Activated B cell treated with CpG ODN at 0.5 μM for 24 hours (primary cell): ENCODE measurements at regions of chr7 and their contacts with region 1.

Region 1: DNA sequence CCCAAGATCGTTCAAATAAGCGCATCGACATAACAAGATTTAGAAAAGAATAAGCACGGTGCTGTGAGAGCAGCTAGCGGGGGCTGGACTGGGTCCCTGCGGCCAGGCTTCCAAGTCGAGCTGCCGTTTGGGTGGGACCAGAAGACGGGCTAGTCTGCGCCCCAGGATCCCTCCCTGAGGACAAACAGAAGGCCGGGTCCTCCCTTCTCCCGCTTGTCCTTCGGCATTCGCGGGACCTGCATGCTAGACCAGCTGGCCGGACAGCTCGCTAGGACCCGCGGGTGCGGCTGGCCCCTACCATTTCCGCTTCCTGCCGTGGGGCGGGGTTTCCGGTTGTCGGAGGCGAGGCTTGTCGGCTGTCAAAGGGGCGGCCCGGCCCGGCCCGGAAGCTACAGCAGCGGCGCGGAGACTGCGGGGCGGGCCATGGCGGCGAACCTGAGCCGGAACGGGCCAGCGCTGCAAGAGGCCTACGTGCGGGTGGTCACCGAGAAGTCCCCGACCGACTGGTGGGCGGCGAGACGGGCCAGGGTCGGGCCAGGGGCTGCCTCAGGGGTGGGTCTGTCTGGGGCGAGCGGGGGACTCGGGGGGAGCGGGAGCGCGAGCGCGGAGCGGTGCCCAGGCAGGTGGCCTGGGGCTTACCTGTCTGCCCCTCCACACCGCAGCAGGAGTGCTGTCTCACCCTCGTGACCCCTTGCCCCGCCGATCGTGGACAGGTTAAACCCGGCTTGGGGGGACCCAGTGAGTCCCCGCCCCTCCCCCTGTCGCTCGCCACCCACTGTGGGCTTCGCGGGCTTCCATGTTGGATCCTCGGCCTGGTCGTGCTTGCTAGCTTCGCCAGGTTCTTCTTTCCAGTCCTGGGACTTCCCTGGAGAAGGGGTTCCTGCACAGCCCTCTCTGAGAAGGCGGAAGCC is at the start of gene DBNL:
- DNase-seq: peak; percentile 92
- ATAC-seq: peak; percentile 50
- H3K4me3 Mint-ChIP-seq: peak within 1 kb of the TSS; percentile 93
- H3K27ac Mint-ChIP-seq: peak within 1 kb of the TSS; percentile 95
- H3K4me1 Mint-ChIP-seq: peaks cover 64% of the 10 kb centered on the region
- H3K27me3 Mint-ChIP-seq: no peaks in the 10 kb centered on the region
- CTCF ChIP-seq: no peak
- total RNA-seq, gene DBNL: 198 and 210 TPM in 2 replicates

Region 2: GRCh38 chr7:43925984-43926797 is 118.4 kb before region 1 on chr7 and contains the start of gene UBE2D4:
- CTCF ChIA-PET with region 1: no interaction called
- POLR2A ChIA-PET with region 1: interaction called, 13 read pairs
- intact Hi-C with region 1: no loop called
- DNase-seq: peak; percentile 89
- ATAC-seq: peak; percentile 88
- H3K4me3 Mint-ChIP-seq: peak within 1 kb of the TSS; percentile 87
- H3K27ac Mint-ChIP-seq: peak within 1 kb of the TSS; percentile 93
- H3K4me1 Mint-ChIP-seq: peaks cover 24% of the 10 kb centered on the region
- H3K27me3 Mint-ChIP-seq: no peaks in the 10 kb centered on the region
- CTCF ChIP-seq: no peak
- total RNA-seq, gene UBE2D4: 18.9 and 19.6 TPM in 2 replicates

Region 3: DNA sequence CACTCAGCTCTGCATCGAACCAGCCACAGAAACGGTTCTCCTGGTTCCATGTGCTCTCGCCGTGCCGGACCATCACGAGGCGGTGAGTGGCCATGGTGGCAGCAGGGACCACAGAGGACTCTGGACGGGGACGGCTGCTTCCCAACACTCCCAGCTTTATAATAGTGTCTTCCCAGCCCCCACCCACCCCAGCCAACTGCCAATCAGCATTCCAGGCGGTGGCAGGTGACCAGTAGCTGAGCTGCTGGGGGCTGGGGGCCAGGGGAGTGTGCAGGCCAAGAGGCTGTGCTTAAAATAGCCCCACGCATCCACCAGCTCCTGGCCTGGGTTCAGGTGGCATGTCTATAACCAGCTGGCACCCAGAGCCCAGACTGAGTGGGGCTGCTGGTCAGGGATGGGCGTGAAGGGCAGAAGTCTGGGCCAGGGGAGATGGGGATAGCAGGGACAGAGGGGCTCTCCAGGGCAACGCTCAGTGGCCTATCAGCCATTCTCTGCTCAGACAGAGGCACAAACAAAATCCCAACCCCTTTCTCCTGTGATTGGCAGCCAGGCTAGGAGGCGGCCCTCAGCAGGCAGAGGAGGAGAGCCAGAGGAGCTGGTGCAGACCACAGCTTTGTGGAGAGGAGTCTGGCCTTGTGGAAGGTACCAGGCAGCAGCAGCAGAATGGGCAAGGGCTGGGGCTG is 21.0 kb after region 1 on chr7 and contains the start of gene PGAM2:
- CTCF ChIA-PET with region 1: no interaction called
- POLR2A ChIA-PET with region 1: interaction called, 55 read pairs
- intact Hi-C with region 1: no loop called
- DNase-seq: no peak
- ATAC-seq: peak; percentile 32
- H3K4me3 Mint-ChIP-seq: peak within 1 kb of the TSS; percentile 28
- H3K27ac Mint-ChIP-seq: peak within 1 kb of the TSS; percentile 72
- H3K4me1 Mint-ChIP-seq: peaks cover 65% of the 10 kb centered on the region
- H3K27me3 Mint-ChIP-seq: no peaks in the 10 kb centered on the region
- CTCF ChIP-seq: no peak
- total RNA-seq, gene PGAM2: 1.1 and 1.2 TPM in 2 replicates

Region 4: DNA sequence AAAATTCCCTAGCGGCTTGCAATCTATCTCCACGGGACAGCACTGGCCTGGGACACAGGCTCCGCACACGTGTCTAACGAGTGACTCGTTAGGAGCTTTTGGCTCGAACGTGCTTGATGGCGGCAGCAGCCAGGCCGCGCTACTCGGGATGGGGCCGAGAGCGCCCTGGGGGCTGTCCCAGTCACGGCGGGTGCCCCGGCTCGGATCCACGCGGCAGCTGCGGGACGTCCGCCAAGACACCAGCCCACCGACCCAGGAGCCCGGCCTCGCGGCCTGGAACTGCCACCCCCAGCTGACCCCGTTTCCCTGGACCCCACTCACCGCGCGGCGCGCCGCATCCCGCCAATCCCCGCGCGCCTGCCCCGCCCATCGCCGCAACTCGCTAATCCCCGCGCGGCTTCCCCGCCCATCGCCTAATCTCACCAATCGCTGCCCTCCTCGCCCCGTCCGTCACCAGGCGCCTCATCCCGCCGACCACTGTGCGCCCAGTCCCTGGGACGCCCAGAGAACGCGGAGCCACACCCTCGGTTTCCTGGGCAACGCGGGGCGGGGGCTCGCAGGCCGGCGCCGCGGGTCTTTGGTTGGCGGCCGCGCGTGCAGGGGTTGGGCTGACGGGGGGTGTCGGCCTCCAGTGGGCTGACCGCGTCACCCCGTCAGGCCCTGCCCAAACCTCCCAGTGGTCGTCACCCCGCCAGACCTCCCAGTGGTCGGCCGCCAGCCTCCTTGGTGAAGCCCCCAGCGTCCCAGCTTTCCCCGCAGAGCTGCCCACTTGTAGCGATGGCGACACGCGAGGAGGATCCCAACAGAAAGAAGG is 78.8 kb after region 1 on chr7 and contains the start of gene POLD2:
- CTCF ChIA-PET with region 1: no interaction called
- POLR2A ChIA-PET with region 1: interaction called, 16 read pairs
- intact Hi-C with region 1: loop called (anchors 2 kb)
- DNase-seq: peak; percentile 96
- ATAC-seq: peak; percentile 98
- H3K4me3 Mint-ChIP-seq: peak within 1 kb of the TSS; percentile 88
- H3K27ac Mint-ChIP-seq: peak within 1 kb of the TSS; percentile 79
- H3K4me1 Mint-ChIP-seq: peaks cover 25% of the 10 kb centered on the region
- H3K27me3 Mint-ChIP-seq: no peaks in the 10 kb centered on the region
- CTCF ChIP-seq: no peak
- total RNA-seq, gene POLD2: 146 and 147 TPM in 2 replicates

Region 5: DNA sequence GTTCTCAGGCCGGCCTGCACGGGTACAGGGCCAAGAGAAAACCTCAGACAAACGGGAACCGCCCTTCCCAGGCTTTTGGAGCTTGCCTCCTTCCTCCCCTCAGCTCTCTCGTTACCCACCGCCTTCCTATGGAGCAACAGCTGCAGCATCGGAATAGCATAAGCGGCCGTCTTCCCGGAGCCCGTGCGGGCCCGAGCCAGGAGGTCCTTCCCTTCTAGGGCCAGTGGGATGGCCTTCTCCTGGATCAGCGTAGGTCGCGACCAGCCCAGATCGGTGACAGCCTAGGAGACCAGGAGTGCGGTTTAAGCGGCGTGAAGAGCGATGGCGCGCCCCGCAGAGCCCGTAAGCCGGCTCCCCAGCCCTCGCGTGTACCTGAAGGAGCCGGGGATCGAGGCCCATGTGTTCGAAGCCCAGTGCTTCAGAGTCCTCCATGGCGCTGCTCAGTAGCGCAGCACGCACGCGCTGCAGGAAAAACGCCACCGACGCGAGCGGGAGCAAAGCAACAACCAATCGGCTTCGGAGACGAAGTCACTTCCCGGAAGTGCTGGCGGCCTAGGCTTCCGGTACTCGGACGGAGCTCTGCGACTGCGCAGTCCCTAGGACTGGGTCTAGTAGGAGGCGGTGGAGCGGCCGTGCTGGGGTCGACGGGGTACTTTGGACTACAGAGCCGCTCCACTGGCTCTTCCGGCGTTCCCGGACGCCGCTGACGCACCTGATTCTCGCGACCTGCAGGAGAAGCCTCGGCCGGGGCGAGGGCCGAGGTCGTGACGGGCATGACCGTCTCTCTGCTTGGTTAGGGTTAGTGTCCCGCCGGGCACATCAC is 529.1 kb after region 1 on chr7 and contains the start of gene DDX56:
- CTCF ChIA-PET with region 1: no interaction called
- POLR2A ChIA-PET with region 1: no interaction called
- intact Hi-C with region 1: loop called (anchors 10 kb)
- DNase-seq: peak; percentile 82
- ATAC-seq: peak; percentile 97
- H3K4me3 Mint-ChIP-seq: peak within 1 kb of the TSS; percentile 94
- H3K27ac Mint-ChIP-seq: peak within 1 kb of the TSS; percentile 94
- H3K4me1 Mint-ChIP-seq: peaks cover 35% of the 10 kb centered on the region
- H3K27me3 Mint-ChIP-seq: no peaks in the 10 kb centered on the region
- CTCF ChIP-seq: no peak
- total RNA-seq, gene DDX56: 92.6 and 99.7 TPM in 2 replicates